Activated CD4-positive, alpha-beta T cell treated with anti-CD3 and anti-CD28 coated beads, Interleukin-2, amount 10 ng/mL, durations not matched to agents 7 days and 5 days (primary cell): ENCODE measurements at regions of chr9 and their contacts with region 1.

Region 1: GRCh38 chr9:133149126-133150107 is 14.3 kb downstream of the GBGT1 start:
- DNase-seq: peak; percentile 78
- H3K4me3 Mint-ChIP-seq: peak overlapping the region; percentile 70
- H3K27ac Mint-ChIP-seq: peak overlapping the region; percentile 83
- H3K4me1 Mint-ChIP-seq: peaks cover 40% of the 10 kb centered on the region
- H3K27me3 Mint-ChIP-seq: no peaks in the 10 kb centered on the region

Region 2: GRCh38 chr9:133023117-133023890 is 126.1 kb before region 1 on chr9:
- CTCF ChIA-PET with region 1: interaction called, 14 read pairs
- POLR2A ChIA-PET with region 1: no interaction called
- DNase-seq: peak; percentile 71
- H3K4me3 Mint-ChIP-seq: peak overlapping the region; percentile 43
- H3K27ac Mint-ChIP-seq: no peak overlapping the region
- H3K4me1 Mint-ChIP-seq: peaks cover 24% of the 10 kb centered on the region
- H3K27me3 Mint-ChIP-seq: peaks cover 4% of the 10 kb centered on the region

Region 3: GRCh38 chr9:133103183-133103986 is 46.0 kb before region 1 on chr9:
- CTCF ChIA-PET with region 1: interaction called, 110 read pairs
- POLR2A ChIA-PET with region 1: interaction called, 3 read pairs
- DNase-seq: peak; percentile 54
- H3K4me3 Mint-ChIP-seq: no peak overlapping the region
- H3K27ac Mint-ChIP-seq: peak overlapping the region; percentile 51
- H3K4me1 Mint-ChIP-seq: peaks cover 2% of the 10 kb centered on the region
- H3K27me3 Mint-ChIP-seq: no peaks in the 10 kb centered on the region

Region 4: GRCh38 chr9:133115448-133116345 is 33.7 kb before region 1 on chr9:
- CTCF ChIA-PET with region 1: interaction called, 110 read pairs
- POLR2A ChIA-PET with region 1: no interaction called
- DNase-seq: peak; percentile 53
- H3K4me3 Mint-ChIP-seq: no peak overlapping the region
- H3K27ac Mint-ChIP-seq: peak overlapping the region; percentile 69
- H3K4me1 Mint-ChIP-seq: peaks cover 63% of the 10 kb centered on the region
- H3K27me3 Mint-ChIP-seq: no peaks in the 10 kb centered on the region

Region 5: GRCh38 chr9:133133681-133134418 is 15.6 kb before region 1 on chr9:
- CTCF ChIA-PET with region 1: interaction called, 53 read pairs
- POLR2A ChIA-PET with region 1: interaction called, 6 read pairs
- DNase-seq: peak; percentile 96
- H3K4me3 Mint-ChIP-seq: peak overlapping the region; percentile 61
- H3K27ac Mint-ChIP-seq: peak overlapping the region; percentile 100
- H3K4me1 Mint-ChIP-seq: peaks cover 82% of the 10 kb centered on the region
- H3K27me3 Mint-ChIP-seq: no peaks in the 10 kb centered on the region